Panc1 (cell line): ENCODE measurements at regions of chr6 and their contacts with region 1.

Region 1: GRCh38 chr6:35342258-35343091 is at the start of gene PPARD:
- DNase-seq: peak; percentile 73
- ATAC-seq: peak; percentile 100
- H3K4me3 ChIP-seq: peak within 1 kb of the TSS; percentile 83 to 89
- H3K27ac ChIP-seq: peak within 1 kb of the TSS; percentile 93
- H3K4me1 ChIP-seq: peaks cover 10% of the 10 kb centered on the region
- H3K27me3 ChIP-seq: no peaks in the 10 kb centered on the region
- CTCF ChIP-seq: peak; percentile 98
- total RNA-seq, gene PPARD: 14.4 TPM

Region 2: GRCh38 chr6:35089935-35090505 is 252.5 kb before region 1 on chr6:
- CTCF ChIA-PET with region 1: no interaction called
- POLR2A ChIA-PET with region 1: no interaction called
- in situ Hi-C with region 1: no loop called
- intact Hi-C with region 1: no loop called
- DNase-seq: no peak
- ATAC-seq: no peak
- H3K4me3 ChIP-seq: no peak overlapping the region
- H3K27ac ChIP-seq: no peak overlapping the region
- H3K4me1 ChIP-seq: no peaks in the 10 kb centered on the region
- H3K27me3 ChIP-seq: no peaks in the 10 kb centered on the region
- CTCF ChIP-seq: no peak

Region 3: DNA sequence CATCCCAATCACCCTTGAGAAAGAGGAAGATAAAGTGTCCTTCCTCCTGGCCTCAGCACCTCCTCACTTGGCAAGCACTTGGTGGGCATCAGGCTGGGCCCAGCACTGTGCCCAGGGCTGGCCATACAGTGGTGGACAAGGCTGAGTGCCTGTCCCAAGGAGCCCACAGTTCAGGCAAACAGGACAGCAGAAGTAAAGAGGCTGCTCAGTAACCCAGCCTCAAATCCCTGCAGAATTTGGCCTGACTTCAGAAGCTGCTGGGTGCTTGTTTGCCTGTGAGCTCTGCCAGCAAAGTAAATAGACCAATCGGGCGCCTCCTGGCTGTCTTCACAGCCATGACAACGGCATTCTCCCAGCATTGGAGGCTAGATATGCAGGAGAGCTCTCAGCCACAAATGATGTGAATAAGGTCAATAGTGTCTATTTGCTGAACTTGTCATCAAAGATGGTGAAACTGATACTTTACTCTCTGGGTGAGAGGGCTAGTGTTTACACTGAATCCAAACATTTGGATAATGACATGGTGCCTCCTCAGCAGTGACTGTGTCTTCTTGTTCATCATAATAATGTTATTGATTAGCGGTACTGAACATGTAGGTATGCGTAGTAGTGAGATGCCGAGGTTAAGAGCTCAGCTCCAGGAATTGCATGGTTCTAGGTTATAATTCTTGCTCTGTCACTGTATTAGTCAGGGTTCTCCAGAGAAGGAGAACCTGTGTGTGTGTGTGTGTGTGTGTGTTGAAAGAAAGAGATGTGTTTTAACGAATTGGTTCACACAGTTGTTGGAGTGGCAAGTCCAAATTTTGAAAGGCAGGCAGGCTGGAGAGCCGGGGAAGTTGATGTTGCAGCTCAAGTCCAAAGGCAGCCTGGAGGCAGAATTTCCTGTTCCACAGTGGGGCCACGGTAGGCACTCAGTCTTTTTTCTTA is 72.9 kb after region 1 on chr6:
- CTCF ChIA-PET with region 1: interaction called, 17 read pairs
- POLR2A ChIA-PET with region 1: interaction called, 3 read pairs
- in situ Hi-C with region 1: no loop called
- intact Hi-C with region 1: loop called (anchors 2 kb)
- DNase-seq: no peak
- ATAC-seq: peak; percentile 89
- H3K4me3 ChIP-seq: no peak overlapping the region
- H3K27ac ChIP-seq: no peak overlapping the region
- H3K4me1 ChIP-seq: peaks cover 13% of the 10 kb centered on the region; the same call in 1 of the 2 replicates
- H3K27me3 ChIP-seq: no peaks in the 10 kb centered on the region
- CTCF ChIP-seq: peak; percentile 77

Region 4: GRCh38 chr6:35463292-35463691 is 120.8 kb after region 1 on chr6:
- CTCF ChIA-PET with region 1: interaction called, 11 read pairs
- POLR2A ChIA-PET with region 1: interaction called, 10 read pairs
- in situ Hi-C with region 1: no loop called
- intact Hi-C with region 1: no loop called
- DNase-seq: no peak
- ATAC-seq: no peak
- H3K4me3 ChIP-seq: no peak overlapping the region
- H3K27ac ChIP-seq: no peak overlapping the region
- H3K4me1 ChIP-seq: peaks cover 6% of the 10 kb centered on the region; the same call in 1 of the 2 replicates
- H3K27me3 ChIP-seq: no peaks in the 10 kb centered on the region
- CTCF ChIP-seq: no peak